Adrenal gland (tissue), 19 donors: ENCODE measurements at regions of chr3 and their contacts with region 1.

Region 1: DNA sequence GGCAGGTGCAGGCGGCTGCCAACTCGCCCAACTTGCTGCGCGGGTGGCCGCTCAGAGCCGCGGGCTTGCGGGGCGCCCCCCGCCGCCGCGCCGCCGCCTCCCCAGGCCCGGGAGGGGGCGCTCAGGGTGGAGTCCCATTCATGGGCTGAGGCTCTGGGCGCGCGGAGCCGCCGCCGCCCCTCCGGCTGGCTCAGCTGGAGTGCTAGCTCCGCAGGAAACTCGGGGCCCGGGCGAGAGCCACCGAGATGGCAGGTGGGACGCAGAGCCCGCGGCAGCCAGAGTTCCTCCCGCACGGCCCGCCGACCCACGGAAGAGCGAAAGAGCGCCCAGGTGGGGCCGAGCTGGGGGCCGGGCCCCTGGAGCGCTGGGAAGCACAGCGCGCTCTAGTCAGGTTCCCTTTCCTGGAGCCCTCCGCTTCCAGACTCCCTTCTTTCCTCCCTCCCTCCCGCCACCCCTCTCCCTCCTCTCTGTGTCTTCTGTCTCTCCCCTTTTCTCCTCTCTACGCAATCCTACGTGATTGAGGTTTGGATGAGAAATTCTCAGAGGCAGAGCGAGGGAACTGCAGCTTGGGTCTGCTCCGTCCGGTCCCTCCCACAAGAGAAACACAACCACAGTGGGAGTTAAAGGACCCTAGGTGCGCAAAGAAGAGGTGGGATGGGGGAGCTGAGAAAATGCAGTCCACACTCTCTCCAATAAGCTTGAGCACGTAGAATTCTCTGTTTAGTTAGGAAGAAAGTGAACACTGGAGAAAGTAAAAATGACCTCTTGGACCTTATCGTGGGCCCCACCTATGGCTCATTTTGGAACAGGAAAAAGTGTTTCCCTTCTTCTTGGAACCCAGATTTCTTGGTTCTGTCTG is 317.3 kb downstream of the FGF12 start:
- DNase-seq: peak; percentile 45 to 63 (median 54)
- H3K4me3 ChIP-seq: peak overlapping the region in 2 of 4 donors; percentile 71
- H3K27ac ChIP-seq: peak overlapping the region; percentile 36 to 93 (median 92)
- H3K4me1 ChIP-seq: peaks cover 5 to 9% of the 10 kb centered on the region in 2 donors
- H3K27me3 ChIP-seq: peaks cover 6% of the 10 kb centered on the region
- CTCF ChIP-seq: peak; percentile 9 to 56 (median 35)
- POLR2A ChIP-seq: peak; percentile 25 to 87

Region 2: DNA sequence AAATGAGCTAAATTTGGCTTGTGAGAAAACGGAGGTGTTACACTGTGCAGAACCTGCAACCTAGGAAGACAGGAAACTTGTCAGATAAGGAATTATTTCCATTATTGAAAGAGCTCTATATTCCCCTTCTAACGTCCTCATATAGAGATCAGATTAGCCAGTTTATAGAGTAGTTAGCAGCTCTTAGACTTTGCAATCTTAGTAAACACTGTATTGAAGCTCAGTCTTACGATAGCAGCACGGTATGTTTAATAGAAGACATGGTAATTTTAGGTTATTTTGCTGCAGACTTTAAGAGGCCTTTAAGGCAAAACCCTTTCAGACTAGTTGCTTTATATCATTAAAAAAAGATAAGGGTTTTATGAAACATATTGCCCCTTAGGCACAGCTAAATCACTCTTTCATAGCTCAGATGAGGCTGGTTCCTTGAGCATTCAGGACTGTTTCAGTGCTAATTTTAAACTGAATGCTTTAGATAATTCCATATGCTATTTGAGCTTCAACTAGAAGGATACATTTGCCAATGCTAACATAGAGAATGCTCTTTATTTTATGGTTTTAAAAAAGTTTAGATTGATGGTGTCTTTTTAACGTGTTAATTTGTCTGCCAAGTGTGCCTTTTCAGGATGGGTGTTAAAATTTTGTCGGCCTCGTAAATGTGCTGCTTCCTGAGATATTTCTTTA is 714.8 kb before region 1 on chr3:
- intact Hi-C with region 1: no loop called
- DNase-seq: no peak
- H3K4me3 ChIP-seq: no peak overlapping the region
- H3K27ac ChIP-seq: no peak overlapping the region
- H3K4me1 ChIP-seq: no peaks in the 10 kb centered on the region
- H3K27me3 ChIP-seq: no peaks in the 10 kb centered on the region
- CTCF ChIP-seq: no peak
- POLR2A ChIP-seq: no peak

Region 3: DNA sequence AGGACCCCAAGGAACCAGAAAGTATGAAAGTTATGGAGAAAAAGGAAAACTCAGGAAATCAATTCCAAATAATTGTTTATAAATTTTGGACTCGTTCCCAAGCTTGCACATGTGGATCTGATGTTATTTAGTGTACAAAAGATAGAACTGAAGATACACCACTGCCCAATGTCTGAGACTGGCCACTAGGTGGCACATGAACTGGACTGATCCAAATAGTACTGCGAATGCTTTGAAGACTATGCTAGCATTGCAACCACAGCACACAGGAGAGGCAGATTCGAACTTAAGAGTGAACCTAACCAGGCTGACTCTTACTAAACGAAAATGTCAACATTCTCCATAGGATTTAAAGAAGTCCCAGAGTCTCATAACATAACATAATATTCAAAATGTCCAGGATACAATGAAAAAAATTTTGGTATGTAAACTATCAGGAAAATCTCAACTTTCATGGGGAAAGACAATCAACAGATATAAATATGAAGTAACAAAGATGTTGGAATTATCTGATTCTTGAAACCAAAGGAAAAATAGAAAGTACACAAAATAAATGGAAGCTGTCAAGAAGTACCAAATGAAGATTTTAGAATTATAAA is 279.4 kb before region 1 on chr3:
- intact Hi-C with region 1: loop called in 1 of 2 experiments (anchors 10 kb)
- DNase-seq: peak; percentile 53 to 86 (median 67)
- H3K4me3 ChIP-seq: no peak overlapping the region
- H3K27ac ChIP-seq: no peak overlapping the region
- H3K4me1 ChIP-seq: no peaks in the 10 kb centered on the region
- H3K27me3 ChIP-seq: no peaks in the 10 kb centered on the region
- CTCF ChIP-seq: peak; percentile 64 to 77 (median 71)
- POLR2A ChIP-seq: no peak